ENCODE measurements at regions of chr18 and their contacts with region 1.

Region 1: DNA sequence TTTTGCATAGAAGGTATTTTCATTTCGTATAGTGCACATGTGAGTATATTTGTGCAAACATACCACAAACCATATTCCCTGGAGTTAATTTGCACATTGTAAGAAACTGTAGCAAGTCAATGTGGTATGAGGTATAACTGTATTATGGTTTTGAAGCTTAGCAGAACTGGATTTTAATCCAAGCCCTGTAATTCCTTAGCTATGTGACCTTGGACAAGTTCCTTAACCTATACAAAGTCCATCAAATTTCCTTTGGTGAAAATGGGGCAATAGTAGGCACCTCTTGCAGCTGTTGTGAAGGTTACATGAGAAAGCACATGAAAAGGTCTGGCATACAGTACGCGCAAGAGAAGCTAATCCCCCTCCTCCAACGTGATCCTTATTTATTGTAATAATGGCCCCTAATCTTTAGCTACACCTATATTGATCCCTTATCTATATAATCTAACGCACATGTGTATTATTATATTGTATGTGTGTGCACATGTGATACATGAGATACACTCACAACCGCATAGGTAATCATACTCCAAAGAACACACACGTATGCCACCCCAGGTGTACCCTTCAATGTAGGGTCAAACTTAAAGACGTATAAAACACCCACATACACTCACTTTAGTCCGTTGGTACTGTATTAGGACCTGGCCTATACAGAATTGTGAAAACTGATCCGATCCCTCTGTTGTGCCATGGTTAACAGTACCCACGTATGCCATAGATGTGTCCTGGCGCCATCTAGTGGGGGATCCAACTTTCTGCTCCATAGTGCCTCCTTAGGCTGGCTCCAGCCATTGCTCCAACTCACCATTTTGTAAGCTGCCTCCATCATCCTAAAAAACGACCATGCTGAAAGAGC is 402.9 kb upstream of the SLC14A2 start:
- DNase-seq: peak; percentile 84
- H3K4me3 Mint-ChIP-seq: no peak overlapping the region
- H3K27ac Mint-ChIP-seq: no peak overlapping the region
- H3K4me1 Mint-ChIP-seq: no peaks in the 10 kb centered on the region
- H3K27me3 Mint-ChIP-seq: no peaks in the 10 kb centered on the region

Region 2: GRCh38 chr18:44130376-44130942 is 1082.0 kb before region 1 on chr18:
- CTCF ChIA-PET with region 1: interaction called, 3 read pairs
- intact Hi-C with region 1: loop called (anchors 1 kb)
- DNase-seq: no peak
- H3K4me3 Mint-ChIP-seq: no peak overlapping the region
- H3K27ac Mint-ChIP-seq: no peak overlapping the region
- H3K4me1 Mint-ChIP-seq: no peaks in the 10 kb centered on the region
- H3K27me3 Mint-ChIP-seq: no peaks in the 10 kb centered on the region

Region 3: GRCh38 chr18:44579028-44579702 is 633.2 kb before region 1 on chr18:
- CTCF ChIA-PET with region 1: no interaction called
- intact Hi-C with region 1: loop called (anchors 1 kb)
- DNase-seq: no peak
- H3K4me3 Mint-ChIP-seq: no peak overlapping the region
- H3K27ac Mint-ChIP-seq: no peak overlapping the region
- H3K4me1 Mint-ChIP-seq: no peaks in the 10 kb centered on the region
- H3K27me3 Mint-ChIP-seq: no peaks in the 10 kb centered on the region